SK-N-SH (cell line): ENCODE measurements at regions of chr1 and their contacts with region 1.

Region 1: DNA sequence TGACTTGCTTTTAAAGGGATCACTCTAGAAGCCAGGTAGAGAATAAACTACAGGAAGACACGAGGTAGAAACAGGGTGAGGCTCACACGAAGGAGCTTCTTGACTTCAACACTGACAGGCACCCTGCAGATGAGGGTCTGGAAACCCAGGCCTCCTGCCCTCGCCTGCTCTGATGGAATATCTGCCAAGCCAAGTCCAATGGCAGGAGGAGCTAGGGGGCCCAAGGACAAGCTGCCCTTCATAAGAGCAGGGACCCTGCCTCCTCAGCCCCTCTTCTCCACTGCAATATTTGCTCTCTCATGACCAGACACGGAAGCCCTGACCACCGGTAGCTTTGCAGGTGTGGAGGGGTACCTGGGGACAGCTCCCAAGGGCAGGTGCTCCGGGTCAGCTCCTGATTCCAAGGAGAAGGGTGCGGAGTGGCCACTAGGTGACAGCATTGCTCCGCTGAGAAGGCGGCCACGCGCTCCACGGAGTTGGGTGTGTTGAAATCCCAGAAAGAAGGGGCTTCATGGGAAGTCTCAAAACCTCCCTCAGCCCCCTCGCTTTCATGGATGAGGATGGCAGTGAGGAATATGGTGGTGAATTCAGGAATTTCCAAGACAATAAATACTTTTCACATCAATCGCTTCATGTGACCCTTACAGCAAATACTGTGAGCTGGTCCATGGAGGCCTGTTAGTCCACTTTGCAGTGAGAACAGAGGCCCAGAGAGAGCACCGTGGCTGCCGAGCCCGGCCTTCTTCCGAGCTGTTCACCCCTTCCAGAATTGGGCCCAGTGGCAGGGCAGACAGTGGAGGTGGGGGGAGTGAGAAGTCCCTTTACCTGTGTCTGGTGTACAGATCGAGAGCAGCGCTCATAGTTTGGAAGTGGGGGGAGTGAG is 33.2 kb upstream of the PAX7 start:
- DNase-seq: peak; percentile 77
- H3K4me3 ChIP-seq: no peak overlapping the region; a peak in 1 of 4 replicates
- H3K27ac ChIP-seq: no peak overlapping the region
- H3K4me1 ChIP-seq: peaks cover 0 to 10% of the 10 kb centered on the region in 2 experiments; a peak in 1 of 4 replicates
- H3K27me3 ChIP-seq: peaks cover 4% of the 10 kb centered on the region; the same call in 1 of the 2 replicates
- CTCF ChIP-seq: peak; percentile 93
- EP300 ChIP-seq: no peak
- RAD21 ChIP-seq: peak; percentile 94

Region 2: GRCh38 chr1:18556364-18556763 is 41.0 kb before region 1 on chr1:
- CTCF ChIA-PET with region 1: interaction called, 10 read pairs
- POLR2A ChIA-PET with region 1: no interaction called
- DNase-seq: peak; percentile 42
- H3K4me3 ChIP-seq: no peak overlapping the region; a peak in 1 of 4 replicates
- H3K27ac ChIP-seq: no peak overlapping the region
- H3K4me1 ChIP-seq: no peaks in the 10 kb centered on the region
- H3K27me3 ChIP-seq: no peaks in the 10 kb centered on the region; the same call in 1 of the 2 replicates
- CTCF ChIP-seq: peak; percentile 44
- EP300 ChIP-seq: no peak
- RAD21 ChIP-seq: peak; percentile 26

Region 3: DNA sequence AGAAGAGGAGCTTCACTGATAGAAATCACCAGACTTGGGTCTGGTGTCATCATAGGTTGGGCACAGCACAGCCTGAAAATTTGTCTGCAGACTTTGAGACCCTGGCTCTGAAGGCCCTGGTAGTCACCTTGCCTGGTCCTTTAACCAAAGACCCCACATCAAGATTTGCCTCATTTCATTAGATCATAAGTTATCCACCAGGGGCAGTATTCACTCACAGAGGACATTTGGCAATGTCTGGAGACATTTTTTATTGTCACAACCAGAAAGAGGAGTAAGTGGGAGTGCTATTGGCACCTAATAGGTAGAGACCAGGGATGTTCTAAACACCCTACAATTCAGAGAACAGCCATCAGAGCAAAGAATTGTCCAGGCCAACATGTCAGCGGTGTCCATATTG is 11.1 kb after region 1 on chr1:
- CTCF ChIA-PET with region 1: interaction called, 33 read pairs
- POLR2A ChIA-PET with region 1: no interaction called
- DNase-seq: no peak
- H3K4me3 ChIP-seq: no peak overlapping the region
- H3K27ac ChIP-seq: no peak overlapping the region
- H3K4me1 ChIP-seq: no peaks in the 10 kb centered on the region
- H3K27me3 ChIP-seq: no peaks in the 10 kb centered on the region
- CTCF ChIP-seq: peak; percentile 28; the same call in 1 of the 2 replicates
- EP300 ChIP-seq: no peak
- RAD21 ChIP-seq: no peak

Region 4: GRCh38 chr1:18649693-18650370 is 52.4 kb after region 1 on chr1:
- CTCF ChIA-PET with region 1: interaction called, 21 read pairs
- POLR2A ChIA-PET with region 1: no interaction called
- DNase-seq: peak; percentile 35
- H3K4me3 ChIP-seq: no peak overlapping the region
- H3K27ac ChIP-seq: no peak overlapping the region
- H3K4me1 ChIP-seq: no peaks in the 10 kb centered on the region; a peak in 1 of 4 replicates
- H3K27me3 ChIP-seq: peaks cover 55% of the 10 kb centered on the region
- CTCF ChIP-seq: no peak
- EP300 ChIP-seq: no peak
- RAD21 ChIP-seq: no peak

Region 5: GRCh38 chr1:18693256-18694098 is 96.1 kb after region 1 on chr1:
- CTCF ChIA-PET with region 1: interaction called, 12 read pairs
- POLR2A ChIA-PET with region 1: no interaction called
- DNase-seq: no peak
- H3K4me3 ChIP-seq: no peak overlapping the region
- H3K27ac ChIP-seq: no peak overlapping the region
- H3K4me1 ChIP-seq: no peaks in the 10 kb centered on the region; a peak in 1 of 4 replicates
- H3K27me3 ChIP-seq: no peaks in the 10 kb centered on the region
- CTCF ChIP-seq: no peak
- EP300 ChIP-seq: no peak
- RAD21 ChIP-seq: no peak

Region 6: DNA sequence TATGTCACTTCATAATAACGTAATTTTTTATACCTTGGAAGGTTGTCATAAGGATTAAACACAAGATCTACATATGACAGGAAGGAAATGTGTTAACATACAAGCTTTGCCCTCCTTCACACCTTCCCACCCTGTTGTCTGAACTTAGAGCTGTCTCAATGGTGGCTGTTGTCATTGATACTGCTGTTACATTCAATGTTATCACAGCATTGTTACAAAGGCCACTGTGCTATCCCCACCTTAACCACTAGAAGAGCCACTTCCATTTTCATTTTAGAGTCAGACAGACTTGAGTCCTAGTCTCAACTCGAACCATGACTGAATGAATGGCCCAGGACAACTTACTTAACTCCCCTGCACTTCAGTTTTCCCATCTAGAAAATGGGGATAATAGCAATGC is 230.8 kb after region 1 on chr1:
- CTCF ChIA-PET with region 1: interaction called, 279 read pairs
- POLR2A ChIA-PET with region 1: interaction called, 3 read pairs
- DNase-seq: no peak
- H3K4me3 ChIP-seq: no peak overlapping the region
- H3K27ac ChIP-seq: no peak overlapping the region
- H3K4me1 ChIP-seq: peaks cover 0 to 19% of the 10 kb centered on the region in 2 experiments; a peak in 1 of 4 replicates
- H3K27me3 ChIP-seq: no peaks in the 10 kb centered on the region
- CTCF ChIP-seq: no peak
- EP300 ChIP-seq: no peak
- RAD21 ChIP-seq: no peak

Region 7: DNA sequence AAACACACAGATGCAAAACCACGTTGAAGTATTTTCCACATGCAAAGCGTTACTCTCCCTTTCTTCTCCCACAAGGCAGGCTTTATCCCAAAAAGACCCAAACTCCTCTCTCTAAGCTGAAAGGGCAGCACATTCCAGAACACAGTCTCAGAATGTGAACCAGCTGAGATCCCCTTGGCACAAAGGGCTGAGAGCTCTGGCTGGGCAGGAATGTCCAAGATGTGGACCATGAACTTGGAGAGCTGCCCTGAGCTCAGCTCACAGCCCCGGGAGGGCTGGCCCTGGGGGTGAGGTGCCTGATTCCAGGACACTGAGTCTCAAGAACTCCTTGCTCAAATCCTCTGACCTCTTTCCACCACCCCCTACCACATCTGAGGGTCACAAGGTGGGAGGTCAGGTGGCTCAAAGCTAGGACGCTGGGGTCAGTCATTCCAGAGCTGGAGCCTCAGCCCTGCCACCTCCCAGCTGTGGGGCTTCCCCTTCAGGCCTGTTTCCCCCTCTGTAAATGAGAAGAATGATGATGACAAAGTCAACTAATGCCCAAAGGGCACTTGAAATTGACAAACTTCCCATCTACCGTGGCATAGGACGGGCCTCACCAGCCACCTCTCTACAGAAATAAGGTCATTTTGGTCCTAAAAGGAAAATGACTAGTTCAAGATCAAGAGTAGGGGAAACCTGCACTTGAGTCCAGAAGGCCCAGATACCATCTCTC is 293.5 kb after region 1 on chr1:
- CTCF ChIA-PET with region 1: interaction called, 350 read pairs
- POLR2A ChIA-PET with region 1: no interaction called
- DNase-seq: no peak
- H3K4me3 ChIP-seq: no peak overlapping the region
- H3K27ac ChIP-seq: no peak overlapping the region
- H3K4me1 ChIP-seq: peaks cover 4 to 11% of the 10 kb centered on the region in 2 experiments; a peak in 2 of 4 replicates
- H3K27me3 ChIP-seq: no peaks in the 10 kb centered on the region
- CTCF ChIP-seq: no peak
- EP300 ChIP-seq: no peak
- RAD21 ChIP-seq: no peak